ENCODE measurements at regions of chr11 and their contacts with region 1.

Region 1: GRCh38 chr11:95835768-95836488 is 45.6 kb downstream of the CEP57 start:
- DNase-seq: peak; percentile 38 to 44
- ATAC-seq: peak; percentile 94

Region 2: DNA sequence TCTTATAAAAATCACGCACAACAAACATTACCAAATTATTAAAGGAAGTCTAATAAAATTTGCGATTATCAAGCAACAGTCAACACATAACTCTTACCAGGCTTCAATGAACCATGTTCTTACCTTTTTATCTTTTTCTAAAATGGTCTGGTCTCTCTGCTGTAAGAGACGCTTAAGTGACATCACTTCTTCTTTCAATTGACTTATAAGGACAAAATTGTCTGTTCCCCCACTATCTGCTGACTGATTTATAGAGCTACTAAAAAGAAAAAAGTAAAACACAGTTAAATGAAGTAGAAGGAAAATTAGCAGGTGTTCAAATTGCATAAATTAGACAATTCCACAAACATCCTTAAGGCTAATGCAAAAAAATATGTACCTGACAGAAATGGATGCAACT is 57.2 kb before region 1 on chr11:
- intact Hi-C with region 1: no loop called
- DNase-seq: no peak
- ATAC-seq: no peak

Region 3: GRCh38 chr11:96389720-96390487 is 554.0 kb after region 1 on chr11 and contains the starts of genes CCDC82 and JRKL:
- intact Hi-C with region 1: loop called in 1 of 2 experiments (anchors 10 kb)
- DNase-seq: peak; percentile 97 to 99
- ATAC-seq: peak; percentile 98
- total RNA-seq, gene CCDC82: 13.6 to 23.6 TPM
- total RNA-seq, gene JRKL: 8.8 to 9.0 TPM

Measured in left colon (tissue), 2 donors.